ENCODE measurements at regions of chr22 and their contacts with region 1.

Region 1: DNA sequence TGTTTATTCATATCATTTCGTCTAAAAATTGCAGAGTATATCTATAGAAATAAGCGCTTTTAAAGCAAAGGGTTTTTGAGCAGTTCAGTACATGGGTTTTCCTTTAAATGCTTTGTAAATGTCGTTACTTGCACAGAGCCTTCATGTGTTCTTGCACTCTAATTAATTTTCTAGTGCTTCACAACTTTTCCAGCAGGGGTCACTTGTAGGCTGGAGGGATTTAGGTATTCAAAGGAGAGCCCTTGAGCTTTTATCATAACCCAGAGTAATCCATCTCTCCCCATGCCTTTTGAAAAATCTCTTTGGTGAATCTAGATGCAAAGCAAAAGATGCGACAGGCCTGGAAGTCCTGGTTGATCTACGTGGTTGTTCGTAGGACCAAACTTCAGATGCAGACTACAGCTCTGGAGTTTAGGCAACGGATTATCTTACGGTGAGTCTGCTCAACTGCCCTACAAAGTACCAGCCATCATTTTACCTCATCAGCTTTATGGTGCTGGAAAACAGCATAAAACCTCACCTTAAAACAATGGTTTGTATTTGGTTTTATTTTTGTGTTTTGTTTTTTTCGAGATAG is 60.4 kb downstream of the SFI1 start:
- DNase-seq: no peak
- H3K4me3 ChIP-seq: no peak overlapping the region
- H3K27ac ChIP-seq: no peak overlapping the region
- H3K4me1 ChIP-seq: peaks cover 0 to 5% (median 2%) of the 10 kb centered on the region in 4 donors
- H3K27me3 ChIP-seq: no peaks in the 10 kb centered on the region
- CTCF ChIP-seq: peak; percentile 44 to 63 (median 48)
- EP300 ChIP-seq: no peak
- POLR2A ChIP-seq: no peak

Region 2: DNA sequence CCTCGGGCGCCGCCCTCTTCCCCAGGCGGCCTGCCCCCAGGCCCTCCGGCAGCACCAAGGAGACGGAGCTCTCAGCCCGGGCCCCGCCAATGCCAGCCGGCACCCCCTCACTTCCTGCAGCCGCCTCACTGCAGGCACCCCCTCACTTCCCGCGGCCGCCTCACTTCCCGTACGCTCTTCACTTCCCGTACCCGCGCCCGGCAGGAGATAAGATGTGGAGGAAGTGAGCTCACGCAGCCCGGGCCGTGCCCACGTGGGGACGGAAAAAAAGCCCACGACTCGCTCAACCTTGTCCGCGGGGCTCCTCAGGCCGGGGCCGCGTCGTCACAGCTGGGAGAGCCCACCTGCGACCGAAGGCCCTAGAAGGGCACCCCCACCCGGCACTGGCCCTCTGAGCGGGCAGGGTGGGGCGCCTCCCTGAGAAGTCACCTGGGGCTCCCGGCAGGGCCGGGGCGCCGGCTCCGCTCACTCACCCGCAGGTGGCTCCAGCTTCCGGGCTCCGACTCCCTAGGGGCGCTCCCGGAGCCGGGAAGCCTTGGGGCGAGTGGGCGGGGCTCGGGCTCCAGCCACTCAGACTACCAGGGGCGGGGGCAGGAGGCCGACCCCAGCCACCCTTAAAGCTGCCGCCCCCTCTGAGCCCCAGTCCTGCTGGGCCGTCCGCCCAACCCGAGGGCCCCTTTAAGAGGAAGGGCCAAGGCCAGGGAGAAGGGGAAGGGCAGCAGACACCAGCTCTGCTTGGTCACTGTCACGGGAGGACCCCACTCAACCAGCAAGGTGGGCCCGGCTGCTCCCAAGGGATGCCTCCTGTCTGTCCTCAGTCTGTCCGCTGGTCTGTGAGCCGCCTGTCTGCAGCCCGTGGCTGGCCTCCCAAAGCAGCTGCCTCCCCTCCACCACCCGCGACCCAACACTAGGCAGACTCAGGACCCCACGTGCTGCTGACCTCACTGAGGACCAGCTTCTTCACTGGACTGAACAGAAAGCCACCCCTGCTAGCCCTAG is 73.9 kb after region 1 on chr22:
- intact Hi-C with region 1: loop called (anchors 5 kb)
- DNase-seq: peak; percentile 95
- H3K4me3 ChIP-seq: peak overlapping the region; percentile 69 to 85 (median 76)
- H3K27ac ChIP-seq: peak overlapping the region; percentile 77 to 85 (median 82)
- H3K4me1 ChIP-seq: peaks cover 45 to 71% (median 61%) of the 10 kb centered on the region in 4 donors
- H3K27me3 ChIP-seq: no peaks in the 10 kb centered on the region
- CTCF ChIP-seq: no peak
- EP300 ChIP-seq: no peak
- POLR2A ChIP-seq: no peak